ENCODE measurements at regions of chr15 and their contacts with region 1.

Region 1: GRCh38 chr15:80679167-80680131 is 15.7 kb upstream of the ABHD17C start:
- DNase-seq: no peak
- H3K4me3 ChIP-seq: no peak overlapping the region
- H3K27ac ChIP-seq: no peak overlapping the region
- H3K4me1 ChIP-seq: no peaks in the 10 kb centered on the region
- H3K27me3 ChIP-seq: no peaks in the 10 kb centered on the region
- CTCF ChIP-seq: no peak

Region 2: DNA sequence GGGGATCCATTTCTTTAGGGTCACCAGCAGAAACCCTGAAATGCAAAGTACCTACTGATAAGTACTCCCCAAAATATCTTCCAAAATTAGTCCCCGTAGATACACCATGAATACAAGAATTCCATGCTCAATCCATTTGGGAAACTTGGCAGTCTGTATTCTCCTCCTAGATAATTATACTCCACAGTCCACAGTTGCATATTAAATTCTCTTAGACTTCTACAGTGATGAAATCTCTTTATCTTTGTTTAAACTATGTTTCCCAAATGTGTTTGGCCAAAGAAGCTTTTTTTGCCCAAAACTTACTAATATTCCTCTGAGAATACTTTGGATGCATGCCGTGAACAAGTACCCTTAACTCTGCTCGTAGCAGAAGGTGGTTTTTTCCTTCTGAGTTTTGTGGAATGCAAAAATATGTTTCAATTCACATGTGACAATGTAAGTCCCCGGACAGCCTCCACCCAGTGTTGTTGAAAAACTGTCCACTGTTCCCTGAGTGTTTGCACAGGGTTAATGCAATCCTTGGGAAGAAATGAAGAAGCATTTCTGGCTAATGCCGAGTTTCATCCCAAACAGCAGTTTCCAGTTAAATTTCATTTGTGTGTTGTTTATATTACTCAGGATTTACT is 148.6 kb before region 1 on chr15:
- intact Hi-C with region 1: loop called (anchors 5 kb)
- DNase-seq: no peak
- H3K4me3 ChIP-seq: no peak overlapping the region
- H3K27ac ChIP-seq: peak overlapping the region in 1 of 2 donors; percentile 2
- H3K4me1 ChIP-seq: no peaks in the 10 kb centered on the region
- H3K27me3 ChIP-seq: no peaks in the 10 kb centered on the region
- CTCF ChIP-seq: no peak

Region 3: DNA sequence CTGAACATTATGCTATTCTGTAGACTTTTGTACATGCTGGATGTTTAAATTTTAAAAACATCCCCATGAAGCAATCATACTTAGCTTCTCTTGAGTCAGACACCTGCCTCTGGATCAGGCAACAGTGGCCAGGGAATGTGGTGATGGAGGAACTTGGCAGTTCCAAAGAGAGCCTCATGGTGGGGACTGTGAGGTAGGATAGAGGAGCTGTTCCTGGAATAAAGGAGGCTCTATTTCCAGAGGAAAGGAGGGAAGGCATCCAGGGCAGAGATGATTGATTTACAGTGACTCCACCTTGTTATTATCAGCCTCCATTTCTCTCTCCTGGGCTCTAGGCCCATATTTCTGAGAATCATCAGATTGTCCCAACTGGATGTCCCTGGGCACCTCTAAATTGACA is 19.3 kb before region 1 on chr15:
- intact Hi-C with region 1: no loop called
- DNase-seq: no peak
- H3K4me3 ChIP-seq: no peak overlapping the region
- H3K27ac ChIP-seq: no peak overlapping the region
- H3K4me1 ChIP-seq: no peaks in the 10 kb centered on the region
- H3K27me3 ChIP-seq: no peaks in the 10 kb centered on the region
- CTCF ChIP-seq: no peak